ENCODE measurements at regions of chr11 and their contacts with region 1.

Region 1: GRCh38 chr11:66466225-66467027 is at the start of gene PELI3:
- DNase-seq: peak; percentile 87 to 90
- ATAC-seq: peak; percentile 87 to 92
- H3K4me3 ChIP-seq: peak within 1 kb of the TSS; percentile 61 to 89 (median 70)
- H3K27ac ChIP-seq: peak within 1 kb of the TSS; percentile 73 to 81 (median 78)
- H3K4me1 ChIP-seq: peaks cover 6 to 10% of the 10 kb centered on the region in 2 donors
- H3K27me3 ChIP-seq: no peaks in the 10 kb centered on the region
- CTCF ChIP-seq: no peak
- POLR2A ChIP-seq: peak in 1 of 2 donors; percentile 71
- total RNA-seq, gene PELI3: 26.1 to 55.9 (median 37.3) TPM

Region 2: DNA sequence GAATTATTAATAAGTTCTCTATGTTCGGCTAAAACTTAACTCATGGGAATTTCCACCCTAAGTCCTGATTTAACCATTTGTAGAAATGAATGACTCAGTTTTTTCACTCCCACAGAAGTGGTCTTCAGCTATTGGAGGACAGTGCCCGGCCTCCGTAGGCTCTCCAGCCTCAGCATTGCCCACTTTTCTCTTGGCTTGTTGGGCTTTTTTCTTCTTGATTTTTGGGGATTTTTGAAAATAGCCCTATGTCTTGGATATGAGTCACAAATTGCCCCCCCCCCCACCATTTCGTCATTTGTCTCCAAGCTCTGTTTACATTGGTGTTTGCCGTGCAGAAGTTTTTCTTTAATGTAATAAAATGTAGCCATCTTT is 329.7 kb before region 1 on chr11:
- in situ Hi-C with region 1: no loop called
- intact Hi-C with region 1: no loop called
- DNase-seq: no peak
- ATAC-seq: no peak
- H3K4me3 ChIP-seq: no peak overlapping the region
- H3K27ac ChIP-seq: no peak overlapping the region
- H3K4me1 ChIP-seq: peaks cover 0 to 3% of the 10 kb centered on the region in 2 donors
- H3K27me3 ChIP-seq: no peaks in the 10 kb centered on the region
- CTCF ChIP-seq: no peak
- POLR2A ChIP-seq: no peak

Region 3: DNA sequence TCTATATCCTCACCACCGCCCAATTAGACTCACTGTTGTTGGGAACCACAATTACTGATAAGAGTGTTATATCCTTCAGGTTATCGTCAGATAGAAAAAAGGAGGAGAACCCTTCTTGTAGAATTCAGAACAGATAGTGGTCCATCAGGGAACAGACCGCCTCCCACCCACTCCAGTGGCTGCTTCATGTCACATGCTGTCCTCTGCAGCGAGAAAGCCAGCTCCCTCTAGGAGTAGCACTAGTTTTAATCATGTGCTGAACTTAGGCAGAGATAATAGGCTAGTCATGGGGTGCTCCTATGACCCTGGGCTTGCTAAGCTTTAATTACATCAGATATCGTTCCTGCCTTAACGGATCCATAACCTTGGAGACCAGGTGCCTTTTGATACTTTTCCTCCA is 249.5 kb before region 1 on chr11:
- in situ Hi-C with region 1: no loop called
- intact Hi-C with region 1: no loop called
- DNase-seq: no peak
- ATAC-seq: no peak
- H3K4me3 ChIP-seq: no peak overlapping the region
- H3K27ac ChIP-seq: no peak overlapping the region
- H3K4me1 ChIP-seq: no peaks in the 10 kb centered on the region
- H3K27me3 ChIP-seq: no peaks in the 10 kb centered on the region
- CTCF ChIP-seq: no peak
- POLR2A ChIP-seq: no peak

Region 4: GRCh38 chr11:66510271-66510989 is 44.0 kb after region 1 on chr11 and contains the start of gene BBS1:
- in situ Hi-C with region 1: no loop called
- intact Hi-C with region 1: loop called (anchors 2 kb)
- DNase-seq: peak; percentile 66 to 80
- ATAC-seq: peak; percentile 93 to 95
- H3K4me3 ChIP-seq: peak within 1 kb of the TSS; percentile 82 to 95 (median 86)
- H3K27ac ChIP-seq: peak within 1 kb of the TSS; percentile 67 to 79 (median 74)
- H3K4me1 ChIP-seq: peaks cover 11 to 17% of the 10 kb centered on the region in 2 donors
- H3K27me3 ChIP-seq: no peaks in the 10 kb centered on the region
- CTCF ChIP-seq: peak in 1 of 5 experiments; percentile 20
- POLR2A ChIP-seq: peak in 1 of 2 donors; percentile 20
- total RNA-seq, gene BBS1: 19.8 to 34.5 (median 31.2) TPM

Region 5: GRCh38 chr11:66638177-66639065 is 172.0 kb after region 1 on chr11 and contains the start of gene RBM4:
- in situ Hi-C with region 1: no loop called
- intact Hi-C with region 1: loop called (anchors 5 kb)
- DNase-seq: peak; percentile 100
- ATAC-seq: peak; percentile 99
- H3K4me3 ChIP-seq: peak within 1 kb of the TSS; percentile 73 to 90 (median 84)
- H3K27ac ChIP-seq: peak within 1 kb of the TSS; percentile 90 to 94 (median 92)
- H3K4me1 ChIP-seq: peaks cover 49 to 56% of the 10 kb centered on the region in 2 donors
- H3K27me3 ChIP-seq: no peaks in the 10 kb centered on the region
- CTCF ChIP-seq: peak in 2 of 5 experiments; percentile 13 to 28
- POLR2A ChIP-seq: peak; percentile 92 to 95
- total RNA-seq, gene RBM4: 62.4 to 117 (median 69.2) TPM